ENCODE measurements at regions of chr13 and their contacts with region 1.

Region 1: DNA sequence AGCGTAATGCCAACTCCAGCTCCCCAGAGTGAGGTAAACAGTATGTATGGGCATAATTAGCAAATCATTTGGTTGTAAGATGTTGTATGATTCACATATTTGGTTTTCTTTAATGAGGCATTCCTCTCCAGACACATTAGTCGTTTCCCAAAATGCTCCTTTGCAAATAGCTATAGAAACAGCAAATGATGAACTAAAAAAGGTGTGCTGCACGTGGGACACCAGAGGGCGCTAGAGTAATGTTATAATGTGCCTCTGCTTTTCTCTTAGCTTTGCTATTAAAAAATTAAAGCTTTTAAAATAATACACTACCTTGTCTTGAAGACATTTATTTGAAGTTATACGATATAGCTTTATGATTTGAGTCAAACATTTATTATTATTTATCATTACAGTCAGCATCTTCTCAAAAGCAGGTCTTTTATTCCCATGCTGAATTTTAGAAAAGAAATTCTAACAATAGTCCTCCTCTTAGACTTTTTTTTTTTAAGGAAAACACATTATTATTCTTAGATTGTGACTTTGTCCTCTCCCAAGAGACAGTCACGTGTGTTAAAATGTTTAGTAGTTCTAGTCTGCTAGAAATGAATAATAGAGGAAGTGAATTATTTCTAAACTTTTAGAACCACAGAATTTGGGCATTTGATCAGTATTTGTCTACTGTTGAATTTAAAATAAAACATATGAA is 121.6 kb upstream of the FRY start:
- DNase-seq: no peak

Region 2: GRCh38 chr13:31706105-31706504 is 203.9 kb before region 1 on chr13:
- intact Hi-C with region 1: no loop called
- DNase-seq: no peak

Region 3: GRCh38 chr13:31835932-31836331 is 74.1 kb before region 1 on chr13:
- intact Hi-C with region 1: no loop called
- DNase-seq: no peak

Region 4: GRCh38 chr13:31919971-31920726 is 10.1 kb after region 1 on chr13:
- intact Hi-C with region 1: no loop called
- DNase-seq: no peak

Region 5: GRCh38 chr13:31930490-31930889 is 20.5 kb after region 1 on chr13:
- intact Hi-C with region 1: no loop called
- DNase-seq: no peak

Region 6: GRCh38 chr13:32019612-32020233 is 109.7 kb after region 1 on chr13:
- intact Hi-C with region 1: loop called in 1 of 2 experiments (anchors 10 kb)
- DNase-seq: no peak

Measured in posterior vena cava (tissue), 2 donors.